ENCODE measurements at regions of chr9 and their contacts with region 1.

Region 1: DNA sequence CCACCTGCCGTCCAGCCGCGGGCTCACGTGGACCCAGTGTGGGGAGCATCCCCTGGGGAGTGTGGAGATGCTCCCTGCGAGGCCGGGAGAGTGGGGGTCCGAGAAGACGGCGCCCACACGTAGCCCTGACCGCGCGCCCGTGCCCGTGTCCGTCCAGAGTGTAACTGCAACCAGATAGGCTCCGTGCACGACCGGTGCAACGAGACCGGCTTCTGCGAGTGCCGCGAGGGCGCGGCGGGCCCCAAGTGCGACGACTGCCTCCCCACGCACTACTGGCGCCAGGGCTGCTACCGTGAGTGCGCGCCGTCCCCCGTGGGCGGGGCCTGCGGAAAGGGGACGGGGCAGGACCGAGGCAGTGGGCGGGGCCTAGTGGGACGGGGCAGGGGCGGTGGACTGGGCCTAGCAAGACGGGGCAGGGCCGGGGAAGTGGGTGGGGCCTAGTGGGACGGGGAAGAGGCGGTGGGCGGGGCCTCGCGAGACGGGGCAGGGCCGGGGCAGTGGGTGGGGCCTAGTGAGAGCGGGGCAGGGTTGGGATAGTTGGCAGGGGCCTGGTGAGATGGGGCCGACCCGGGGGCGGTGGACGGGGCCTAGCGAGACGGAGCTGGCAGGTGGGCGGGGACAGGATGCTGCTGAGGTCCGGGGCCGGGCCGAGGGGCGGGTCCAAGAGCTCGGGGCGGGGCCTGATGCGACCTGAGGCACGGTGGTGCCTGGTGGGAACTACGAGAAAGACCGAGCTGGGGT is 79.1 kb downstream of the NTNG2 start:
- DNase-seq: peak; percentile 98 to 100 (median 99)
- ATAC-seq: peak; percentile 87
- H3K4me3 ChIP-seq: peak overlapping the region; percentile 67 to 94
- H3K4me3 Mint-ChIP-seq: peak overlapping the region; percentile 97
- H3K27ac ChIP-seq: peak overlapping the region in 1 of 2 experiments; percentile 45
- H3K27ac Mint-ChIP-seq: peak overlapping the region; percentile 80
- H3K4me1 ChIP-seq: peaks cover 20% of the 10 kb centered on the region
- H3K4me1 Mint-ChIP-seq: peaks cover 13% of the 10 kb centered on the region
- H3K27me3 ChIP-seq: peaks cover 0 to under 1% of the 10 kb centered on the region in 2 experiments
- H3K27me3 Mint-ChIP-seq: peaks cover 3% of the 10 kb centered on the region
- CTCF ChIP-seq: no peak

Region 2: GRCh38 chr9:130712564-130713285 is 1528.2 kb before region 1 on chr9:
- CTCF ChIA-PET with region 1: no interaction called
- POLR2A ChIA-PET with region 1: no interaction called
- intact Hi-C with region 1: loop called in 1 of 2 experiments (anchors 5 kb)
- DNase-seq: peak; percentile 87 to 97 (median 95)
- ATAC-seq: peak; percentile 96
- H3K4me3 ChIP-seq: peak overlapping the region; percentile 81 to 92
- H3K4me3 Mint-ChIP-seq: peak overlapping the region; percentile 92
- H3K27ac ChIP-seq: peak overlapping the region; percentile 87 to 97
- H3K27ac Mint-ChIP-seq: peak overlapping the region; percentile 94
- H3K4me1 ChIP-seq: peaks cover 31% of the 10 kb centered on the region
- H3K4me1 Mint-ChIP-seq: peaks cover 36% of the 10 kb centered on the region
- H3K27me3 ChIP-seq: no peaks in the 10 kb centered on the region
- H3K27me3 Mint-ChIP-seq: no peaks in the 10 kb centered on the region
- CTCF ChIP-seq: no peak

Region 3: DNA sequence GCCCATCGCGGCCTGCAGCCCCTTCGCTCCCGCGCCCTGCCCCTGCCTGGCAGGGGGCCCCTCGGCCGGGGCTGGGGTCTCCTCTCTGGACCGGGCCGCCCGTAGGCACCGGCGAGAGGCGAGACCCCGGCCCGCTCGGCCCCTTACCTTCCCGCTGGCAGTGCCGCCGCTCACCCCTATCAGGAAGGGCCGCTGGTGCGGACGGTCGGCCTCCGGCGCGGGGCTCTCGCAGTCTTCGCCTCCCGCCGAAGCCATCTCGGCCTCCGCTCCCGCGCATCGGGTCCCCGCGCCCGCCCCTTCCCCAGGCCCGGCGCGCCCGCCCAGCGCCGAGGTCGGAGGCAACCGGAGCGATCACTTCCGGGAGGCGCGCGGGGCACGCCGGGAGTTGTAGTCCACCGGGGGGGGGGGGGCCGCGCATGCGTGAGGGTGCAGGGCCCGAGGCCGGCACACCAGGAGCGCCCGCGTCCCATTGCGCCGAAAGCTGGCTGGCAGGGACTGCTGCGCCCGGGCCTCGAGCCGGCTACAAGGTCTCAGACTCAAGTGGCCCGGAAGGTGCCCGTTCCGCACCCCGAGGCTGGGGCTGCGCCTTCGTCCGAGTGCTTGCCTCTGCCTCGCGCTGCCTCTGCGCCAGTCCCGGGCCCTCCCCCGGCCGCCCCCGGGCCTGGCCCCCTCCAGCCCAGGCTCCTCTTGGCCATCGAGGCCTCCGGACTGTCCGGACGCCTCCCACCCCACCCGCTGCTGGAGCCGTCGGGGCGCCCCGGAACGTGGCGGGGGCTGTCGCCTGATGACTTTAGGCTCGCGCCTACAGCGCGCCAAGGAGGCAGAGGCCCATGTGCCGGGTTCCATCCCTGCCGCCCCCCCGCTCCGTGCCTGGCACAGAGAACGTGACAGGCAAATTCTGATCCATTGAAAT is 709.7 kb before region 1 on chr9 and contains the start of gene UCK1:
- CTCF ChIA-PET with region 1: no interaction called
- POLR2A ChIA-PET with region 1: no interaction called
- intact Hi-C with region 1: loop called in 1 of 2 experiments (anchors 2 kb)
- DNase-seq: peak; percentile 42 to 89 (median 68)
- ATAC-seq: peak; percentile 91
- H3K4me3 ChIP-seq: peak within 1 kb of the TSS; percentile 64 to 73
- H3K4me3 Mint-ChIP-seq: peak within 1 kb of the TSS; percentile 74
- H3K27ac ChIP-seq: peak within 1 kb of the TSS; percentile 51 to 53
- H3K27ac Mint-ChIP-seq: peak within 1 kb of the TSS; percentile 55
- H3K4me1 ChIP-seq: peaks cover 35% of the 10 kb centered on the region
- H3K4me1 Mint-ChIP-seq: peaks cover 35% of the 10 kb centered on the region
- H3K27me3 ChIP-seq: no peaks in the 10 kb centered on the region
- H3K27me3 Mint-ChIP-seq: no peaks in the 10 kb centered on the region
- CTCF ChIP-seq: no peak
- total RNA-seq, gene UCK1: 22.6 to 24.7 TPM

Region 4: DNA sequence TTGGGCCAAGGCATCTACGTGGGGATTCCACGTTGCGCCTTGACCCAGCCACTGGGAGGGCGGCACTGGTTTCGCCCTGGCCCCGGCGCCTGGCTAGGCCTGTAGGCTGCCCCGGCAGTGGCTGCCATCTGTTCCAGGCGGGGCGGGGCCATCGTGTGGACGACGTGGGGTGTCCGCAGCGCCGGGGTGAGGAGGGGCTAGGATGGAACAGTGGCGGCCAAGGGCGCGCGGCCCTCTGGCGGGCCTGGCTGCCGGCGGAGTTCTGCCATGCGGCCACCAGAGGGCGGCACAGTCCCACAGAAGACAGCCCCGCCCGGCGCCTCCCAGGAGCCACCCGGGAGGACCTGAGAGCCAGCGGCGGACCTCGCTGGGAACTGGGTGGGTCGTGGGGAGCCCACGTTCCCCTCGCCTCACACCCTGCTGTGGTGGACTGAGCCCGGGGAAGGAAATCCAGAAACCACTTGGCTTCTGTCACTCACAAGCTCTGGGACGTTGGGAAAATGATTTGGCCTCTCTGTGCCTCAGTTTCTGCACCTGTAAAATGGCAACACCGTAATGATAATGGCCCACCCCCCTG is 478.5 kb before region 1 on chr9:
- CTCF ChIA-PET with region 1: interaction called, 100 read pairs
- POLR2A ChIA-PET with region 1: interaction called, 3 read pairs
- intact Hi-C with region 1: loop called (anchors 1 kb)
- DNase-seq: peak; percentile 57 to 87 (median 75)
- ATAC-seq: peak; percentile 94
- H3K4me3 ChIP-seq: no peak overlapping the region
- H3K4me3 Mint-ChIP-seq: no peak overlapping the region
- H3K27ac ChIP-seq: no peak overlapping the region
- H3K27ac Mint-ChIP-seq: no peak overlapping the region
- H3K4me1 ChIP-seq: peaks cover 5% of the 10 kb centered on the region
- H3K4me1 Mint-ChIP-seq: peaks cover 1% of the 10 kb centered on the region
- H3K27me3 ChIP-seq: no peaks in the 10 kb centered on the region
- H3K27me3 Mint-ChIP-seq: peaks cover 6% of the 10 kb centered on the region
- CTCF ChIP-seq: peak; percentile 99

Region 5: DNA sequence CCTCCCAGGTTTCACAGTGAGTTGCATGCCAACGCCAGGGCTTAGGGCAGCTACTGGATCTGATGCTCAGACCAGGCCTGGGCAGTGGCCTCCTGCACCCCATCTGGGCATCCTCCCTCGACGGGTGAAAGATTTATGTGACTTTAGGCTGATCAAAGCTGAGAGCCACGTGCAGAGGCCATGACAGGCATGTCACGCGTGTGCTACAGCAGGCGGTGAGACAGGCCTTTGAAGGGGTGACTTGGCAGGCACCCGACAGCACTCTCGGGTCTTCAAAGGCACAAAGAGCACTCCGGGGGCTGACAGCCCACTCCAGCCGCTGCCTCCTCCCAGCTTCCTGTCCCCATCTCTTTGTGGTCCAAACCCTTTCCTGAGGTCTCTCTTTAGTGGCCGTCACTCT is 12.9 kb before region 1 on chr9:
- CTCF ChIA-PET with region 1: interaction called, 14 read pairs
- POLR2A ChIA-PET with region 1: no interaction called
- intact Hi-C with region 1: no loop called
- DNase-seq: peak in 2 of 9 experiments; percentile 30 to 32
- ATAC-seq: peak; percentile 61
- H3K4me3 ChIP-seq: no peak overlapping the region
- H3K4me3 Mint-ChIP-seq: no peak overlapping the region
- H3K27ac ChIP-seq: no peak overlapping the region
- H3K27ac Mint-ChIP-seq: no peak overlapping the region
- H3K4me1 ChIP-seq: peaks cover 4% of the 10 kb centered on the region
- H3K4me1 Mint-ChIP-seq: peaks cover 2% of the 10 kb centered on the region
- H3K27me3 ChIP-seq: no peaks in the 10 kb centered on the region
- H3K27me3 Mint-ChIP-seq: peaks cover 2% of the 10 kb centered on the region
- CTCF ChIP-seq: no peak

Region 6: GRCh38 chr9:132651254-132651653 is 410.3 kb after region 1 on chr9:
- CTCF ChIA-PET with region 1: no interaction called
- POLR2A ChIA-PET with region 1: no interaction called
- intact Hi-C with region 1: no loop called
- DNase-seq: peak in 1 of 9 experiments; percentile 21
- ATAC-seq: no peak
- H3K4me3 ChIP-seq: no peak overlapping the region
- H3K4me3 Mint-ChIP-seq: no peak overlapping the region
- H3K27ac ChIP-seq: no peak overlapping the region
- H3K27ac Mint-ChIP-seq: no peak overlapping the region
- H3K4me1 ChIP-seq: no peaks in the 10 kb centered on the region
- H3K4me1 Mint-ChIP-seq: peaks cover 3% of the 10 kb centered on the region
- H3K27me3 ChIP-seq: no peaks in the 10 kb centered on the region
- H3K27me3 Mint-ChIP-seq: no peaks in the 10 kb centered on the region
- CTCF ChIP-seq: no peak

Region 7: GRCh38 chr9:132944302-132945185 is 703.6 kb after region 1 on chr9 and contains the start of gene TSC1:
- CTCF ChIA-PET with region 1: no interaction called
- POLR2A ChIA-PET with region 1: interaction called, 3 read pairs
- intact Hi-C with region 1: loop called (anchors 5 to 10 kb)
- DNase-seq: peak; percentile 96 to 99 (median 98)
- ATAC-seq: peak; percentile 83
- H3K4me3 ChIP-seq: peak within 1 kb of the TSS; percentile 98 to 99
- H3K4me3 Mint-ChIP-seq: peak within 1 kb of the TSS; percentile 97
- H3K27ac ChIP-seq: peak within 1 kb of the TSS; percentile 90 to 100
- H3K27ac Mint-ChIP-seq: peak within 1 kb of the TSS; percentile 100
- H3K4me1 ChIP-seq: peaks cover 17% of the 10 kb centered on the region
- H3K4me1 Mint-ChIP-seq: peaks cover 29% of the 10 kb centered on the region
- H3K27me3 ChIP-seq: no peaks in the 10 kb centered on the region
- H3K27me3 Mint-ChIP-seq: no peaks in the 10 kb centered on the region
- CTCF ChIP-seq: no peak
- total RNA-seq, gene TSC1: 45.6 to 51.1 TPM

Region 8: DNA sequence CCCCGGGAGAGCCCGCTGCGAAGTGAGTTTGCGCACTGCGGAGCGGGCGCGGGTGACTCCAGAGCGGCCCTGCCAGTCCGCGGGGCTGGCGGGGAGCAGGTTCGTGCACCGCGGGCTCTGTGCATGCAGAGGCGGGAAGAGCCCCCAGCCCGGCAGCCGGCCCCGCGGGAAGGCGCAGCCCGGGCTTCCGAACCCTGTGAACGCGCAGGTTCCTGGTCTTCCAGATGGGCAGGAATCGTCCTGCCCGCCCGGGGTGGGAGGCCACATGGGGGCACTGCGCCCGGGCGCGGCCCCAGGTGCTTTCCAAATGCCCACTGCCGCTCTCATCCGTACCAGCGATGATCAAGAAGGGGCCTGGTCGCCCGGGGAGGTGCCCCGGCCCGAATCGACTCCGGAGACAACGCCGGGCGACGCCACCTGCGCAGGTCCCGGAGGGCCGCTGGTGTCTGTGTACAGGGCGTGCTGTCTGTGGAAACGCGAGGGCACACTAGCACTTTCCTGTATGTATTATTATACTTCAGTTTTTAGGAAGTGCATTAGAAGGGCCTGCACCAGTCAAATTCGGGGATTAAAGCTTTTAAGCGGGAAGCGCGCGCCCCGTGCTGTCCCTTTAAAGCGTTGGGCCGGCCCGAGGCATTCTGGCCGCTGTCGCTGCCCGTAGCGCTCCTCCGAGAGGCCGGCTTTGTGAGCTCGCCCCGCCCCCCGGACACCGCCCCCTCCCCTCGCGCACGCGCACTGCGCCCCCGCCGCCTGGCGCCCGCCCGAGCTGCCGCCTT is 1894.6 kb after region 1 on chr9 and contains the start of gene WDR5:
- CTCF ChIA-PET with region 1: no interaction called
- POLR2A ChIA-PET with region 1: no interaction called
- intact Hi-C with region 1: loop called in 1 of 2 experiments (anchors 10 kb)
- DNase-seq: peak; percentile 81 to 95 (median 90)
- ATAC-seq: peak; percentile 86
- H3K4me3 ChIP-seq: peak within 1 kb of the TSS; percentile 92 to 98
- H3K4me3 Mint-ChIP-seq: peak within 1 kb of the TSS; percentile 89
- H3K27ac ChIP-seq: peak within 1 kb of the TSS; percentile 77 to 90
- H3K27ac Mint-ChIP-seq: peak within 1 kb of the TSS; percentile 95
- H3K4me1 ChIP-seq: peaks cover 38% of the 10 kb centered on the region
- H3K4me1 Mint-ChIP-seq: peaks cover 43% of the 10 kb centered on the region
- H3K27me3 ChIP-seq: no peaks in the 10 kb centered on the region
- H3K27me3 Mint-ChIP-seq: no peaks in the 10 kb centered on the region
- CTCF ChIP-seq: no peak
- total RNA-seq, gene WDR5: 15.5 to 16.6 TPM